CD8-positive, alpha-beta T cell (primary cell): ENCODE measurements at regions of chr3 and their contacts with region 1.

Region 1: GRCh38 chr3:52123106-52123725 is 31.0 kb downstream of the POC1A start:
- DNase-seq: peak; percentile 47 to 85 (median 74)
- ATAC-seq: peak; percentile 97
- H3K4me3 ChIP-seq: no peak overlapping the region
- H3K4me3 Mint-ChIP-seq: no peak overlapping the region
- H3K27ac ChIP-seq: no peak overlapping the region
- H3K27ac Mint-ChIP-seq: no peak overlapping the region
- H3K4me1 ChIP-seq: no peaks in the 10 kb centered on the region
- H3K4me1 Mint-ChIP-seq: no peaks in the 10 kb centered on the region
- H3K27me3 ChIP-seq: no peaks in the 10 kb centered on the region
- H3K27me3 Mint-ChIP-seq: no peaks in the 10 kb centered on the region
- CTCF ChIP-seq: peak; percentile 92

Region 2: DNA sequence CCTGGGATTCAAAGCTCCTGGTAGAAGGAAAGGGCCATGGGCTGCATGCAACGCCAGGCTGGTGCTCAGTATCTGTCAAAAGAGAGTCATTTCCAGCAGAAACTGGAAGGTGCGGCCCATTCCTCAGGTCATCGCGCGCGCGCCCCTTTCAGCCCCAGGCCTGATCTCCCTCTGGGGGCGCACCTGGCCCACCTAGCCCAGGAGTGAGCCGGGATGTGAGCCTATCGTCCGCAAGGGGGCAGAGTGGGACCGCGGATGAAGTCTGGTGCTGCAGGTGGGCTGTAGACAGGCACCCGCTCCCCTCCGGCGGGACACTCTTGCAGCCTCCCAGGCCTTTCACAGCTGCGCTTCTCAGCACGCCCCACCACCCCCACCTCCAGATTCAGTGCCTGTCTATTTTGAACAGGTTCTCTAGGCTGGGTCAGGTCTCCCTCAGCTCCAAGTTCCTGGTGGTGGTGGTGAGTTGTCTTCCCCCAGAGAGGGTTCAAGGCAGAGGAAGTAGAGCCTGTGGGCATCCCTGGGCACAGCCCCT is 121.7 kb before region 1 on chr3:
- CTCF ChIA-PET with region 1: interaction called, 164 read pairs
- POLR2A ChIA-PET with region 1: interaction called, 7 read pairs
- intact Hi-C with region 1: loop called (anchors 1 kb)
- DNase-seq: peak; percentile 77 to 94 (median 89)
- ATAC-seq: peak; percentile 99
- H3K4me3 ChIP-seq: no peak overlapping the region
- H3K4me3 Mint-ChIP-seq: no peak overlapping the region
- H3K27ac ChIP-seq: no peak overlapping the region
- H3K27ac Mint-ChIP-seq: no peak overlapping the region
- H3K4me1 ChIP-seq: peaks cover 13% of the 10 kb centered on the region
- H3K4me1 Mint-ChIP-seq: peaks cover 14% of the 10 kb centered on the region
- H3K27me3 ChIP-seq: no peaks in the 10 kb centered on the region
- H3K27me3 Mint-ChIP-seq: no peaks in the 10 kb centered on the region
- CTCF ChIP-seq: peak; percentile 87

Region 3: DNA sequence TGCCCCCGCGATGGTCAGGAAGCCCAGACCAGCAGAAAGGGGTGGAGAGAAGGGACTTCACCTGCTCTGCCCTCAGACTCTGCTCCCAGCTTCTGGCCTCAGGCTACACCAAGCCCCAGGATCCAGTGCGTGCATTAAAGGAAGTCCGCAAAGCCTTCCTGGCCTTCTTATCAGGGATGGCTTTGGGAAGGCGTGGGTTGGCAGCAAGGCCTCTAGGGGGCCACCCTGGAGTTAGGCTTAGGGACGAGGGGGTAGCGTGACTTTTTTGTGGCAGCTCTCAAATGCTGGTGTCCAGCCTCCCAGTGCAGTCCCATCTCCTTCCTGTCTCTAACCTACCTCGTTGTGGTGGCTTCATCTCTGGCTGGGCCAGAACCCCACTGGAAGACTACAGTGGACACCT is 108.6 kb before region 1 on chr3:
- CTCF ChIA-PET with region 1: interaction called, 14 read pairs
- POLR2A ChIA-PET with region 1: no interaction called
- intact Hi-C with region 1: no loop called
- DNase-seq: no peak
- ATAC-seq: no peak
- H3K4me3 ChIP-seq: no peak overlapping the region
- H3K4me3 Mint-ChIP-seq: no peak overlapping the region
- H3K27ac ChIP-seq: no peak overlapping the region
- H3K27ac Mint-ChIP-seq: no peak overlapping the region
- H3K4me1 ChIP-seq: no peaks in the 10 kb centered on the region
- H3K4me1 Mint-ChIP-seq: no peaks in the 10 kb centered on the region
- H3K27me3 ChIP-seq: no peaks in the 10 kb centered on the region
- H3K27me3 Mint-ChIP-seq: no peaks in the 10 kb centered on the region
- CTCF ChIP-seq: no peak

Region 4: DNA sequence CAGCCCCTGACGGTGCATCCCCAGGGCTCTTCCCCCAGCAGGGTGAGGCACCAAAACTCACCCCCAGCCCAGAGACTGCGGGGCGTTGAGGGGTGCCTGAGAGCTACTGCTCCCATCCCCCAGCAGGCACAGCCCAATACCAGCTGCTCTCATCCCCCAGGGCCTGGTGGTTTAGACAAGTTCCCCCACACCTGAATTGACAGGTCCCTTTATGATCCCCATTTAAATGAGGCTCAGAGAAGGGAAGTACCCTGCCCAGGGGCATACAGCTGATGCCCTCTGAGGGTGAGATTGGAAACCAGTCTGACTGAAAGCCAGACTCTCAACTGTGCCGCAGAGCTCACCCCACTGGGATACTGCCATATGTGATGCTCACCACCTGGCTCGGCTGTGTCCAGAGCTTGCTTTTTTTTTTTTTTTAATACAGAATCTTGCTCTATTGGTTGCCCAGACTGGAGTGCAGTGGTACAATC is 87.0 kb before region 1 on chr3:
- CTCF ChIA-PET with region 1: interaction called, 26 read pairs
- POLR2A ChIA-PET with region 1: no interaction called
- intact Hi-C with region 1: loop called in 1 of 2 experiments (anchors 1 kb)
- DNase-seq: no peak
- ATAC-seq: no peak
- H3K4me3 ChIP-seq: no peak overlapping the region
- H3K4me3 Mint-ChIP-seq: no peak overlapping the region
- H3K27ac ChIP-seq: no peak overlapping the region
- H3K27ac Mint-ChIP-seq: no peak overlapping the region
- H3K4me1 ChIP-seq: no peaks in the 10 kb centered on the region
- H3K4me1 Mint-ChIP-seq: no peaks in the 10 kb centered on the region
- H3K27me3 ChIP-seq: no peaks in the 10 kb centered on the region
- H3K27me3 Mint-ChIP-seq: no peaks in the 10 kb centered on the region
- CTCF ChIP-seq: no peak

Region 5: DNA sequence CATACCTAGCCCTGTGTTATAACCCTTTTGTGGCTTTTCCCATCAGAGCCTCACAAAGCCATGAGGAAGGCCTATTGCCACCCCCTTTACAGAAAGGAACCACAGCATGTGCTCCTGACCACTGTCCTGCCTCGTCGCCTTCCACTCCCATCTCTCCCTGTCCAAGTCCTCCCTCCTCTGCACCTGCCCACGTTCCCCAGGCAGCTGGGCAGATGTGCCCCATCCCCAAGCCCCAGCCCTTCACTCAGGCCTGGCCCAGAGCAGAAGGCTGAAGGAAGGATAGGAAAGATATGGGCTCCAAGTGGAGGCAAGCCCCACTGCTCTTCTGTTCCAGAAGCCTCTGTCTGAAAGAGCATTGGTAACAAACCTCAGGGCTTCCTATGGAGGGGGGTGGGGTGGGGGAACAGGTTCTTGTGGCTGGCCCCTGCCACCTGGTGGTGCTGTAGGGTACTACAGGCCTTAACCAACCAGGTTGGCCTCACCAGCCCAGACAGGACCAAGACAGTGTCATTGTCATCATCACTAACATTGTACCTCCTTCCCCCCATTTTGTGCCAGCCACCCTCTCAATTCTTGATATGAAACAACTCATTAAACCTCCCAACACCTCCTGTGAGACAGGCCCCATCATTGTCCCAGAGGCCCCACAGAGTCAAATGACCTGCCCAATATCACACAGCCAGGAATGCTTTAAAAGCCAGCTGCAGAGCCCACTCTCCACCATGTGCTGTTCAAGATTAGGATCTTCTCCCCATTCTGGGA is 21.0 kb after region 1 on chr3:
- CTCF ChIA-PET with region 1: interaction called, 61 read pairs
- POLR2A ChIA-PET with region 1: no interaction called
- intact Hi-C with region 1: loop called (anchors 1 kb)
- DNase-seq: peak; percentile 74 to 92 (median 90)
- ATAC-seq: peak; percentile 100
- H3K4me3 ChIP-seq: no peak overlapping the region
- H3K4me3 Mint-ChIP-seq: no peak overlapping the region
- H3K27ac ChIP-seq: no peak overlapping the region
- H3K27ac Mint-ChIP-seq: peak overlapping the region; percentile 27
- H3K4me1 ChIP-seq: peaks cover 7% of the 10 kb centered on the region
- H3K4me1 Mint-ChIP-seq: peaks cover 7% of the 10 kb centered on the region
- H3K27me3 ChIP-seq: no peaks in the 10 kb centered on the region
- H3K27me3 Mint-ChIP-seq: no peaks in the 10 kb centered on the region
- CTCF ChIP-seq: peak; percentile 92

Region 6: GRCh38 chr3:53040351-53040820 is 917.2 kb after region 1 on chr3:
- CTCF ChIA-PET with region 1: no interaction called
- POLR2A ChIA-PET with region 1: no interaction called
- intact Hi-C with region 1: no loop called
- DNase-seq: no peak
- ATAC-seq: no peak
- H3K4me3 ChIP-seq: no peak overlapping the region
- H3K4me3 Mint-ChIP-seq: no peak overlapping the region
- H3K27ac ChIP-seq: no peak overlapping the region
- H3K27ac Mint-ChIP-seq: no peak overlapping the region
- H3K4me1 ChIP-seq: peaks cover 52% of the 10 kb centered on the region
- H3K4me1 Mint-ChIP-seq: peaks cover 71% of the 10 kb centered on the region
- H3K27me3 ChIP-seq: no peaks in the 10 kb centered on the region
- H3K27me3 Mint-ChIP-seq: no peaks in the 10 kb centered on the region
- CTCF ChIP-seq: no peak